Gastrocnemius medialis (tissue), 4 donors: ENCODE measurements at regions of chr7 and their contacts with region 1.

Region 1: GRCh38 chr7:129502376-129502776 is at the start of gene SMKR1:
- DNase-seq: peak; percentile 17 to 28
- ATAC-seq: peak; percentile 62 to 69
- H3K4me3 ChIP-seq: peak within 1 kb of the TSS; percentile 48 to 66 (median 60)
- H3K27ac ChIP-seq: no peak within 1 kb of the TSS
- H3K4me1 ChIP-seq: peaks cover 0 to 7% of the 10 kb centered on the region in 2 donors
- H3K27me3 ChIP-seq: no peaks in the 10 kb centered on the region
- CTCF ChIP-seq: no peak
- POLR2A ChIP-seq: no peak
- total RNA-seq, gene SMKR1: not detected

Region 2: DNA sequence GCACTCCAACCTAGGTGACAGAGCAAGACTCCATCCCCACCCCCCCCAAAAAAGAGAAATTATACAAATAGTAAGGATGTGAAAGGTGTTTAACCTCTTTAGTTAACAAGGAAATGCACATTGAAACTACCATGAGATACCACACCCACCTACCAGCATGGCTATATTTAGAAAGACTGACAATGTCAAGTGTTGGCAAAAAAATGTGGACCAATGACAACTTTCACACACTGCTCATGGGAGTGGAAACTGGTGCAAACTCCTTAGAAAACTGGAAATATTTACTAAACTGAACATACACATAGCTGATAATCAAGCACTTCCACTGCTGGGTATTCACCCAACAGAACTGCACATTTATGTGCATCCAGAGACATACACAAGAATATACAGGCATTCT is 85.9 kb after region 1 on chr7:
- in situ Hi-C with region 1: no loop called
- intact Hi-C with region 1: no loop called
- DNase-seq: no peak
- ATAC-seq: no peak
- H3K4me3 ChIP-seq: no peak overlapping the region
- H3K27ac ChIP-seq: no peak overlapping the region
- H3K4me1 ChIP-seq: no peaks in the 10 kb centered on the region
- H3K27me3 ChIP-seq: no peaks in the 10 kb centered on the region
- CTCF ChIP-seq: no peak
- POLR2A ChIP-seq: no peak

Region 3: DNA sequence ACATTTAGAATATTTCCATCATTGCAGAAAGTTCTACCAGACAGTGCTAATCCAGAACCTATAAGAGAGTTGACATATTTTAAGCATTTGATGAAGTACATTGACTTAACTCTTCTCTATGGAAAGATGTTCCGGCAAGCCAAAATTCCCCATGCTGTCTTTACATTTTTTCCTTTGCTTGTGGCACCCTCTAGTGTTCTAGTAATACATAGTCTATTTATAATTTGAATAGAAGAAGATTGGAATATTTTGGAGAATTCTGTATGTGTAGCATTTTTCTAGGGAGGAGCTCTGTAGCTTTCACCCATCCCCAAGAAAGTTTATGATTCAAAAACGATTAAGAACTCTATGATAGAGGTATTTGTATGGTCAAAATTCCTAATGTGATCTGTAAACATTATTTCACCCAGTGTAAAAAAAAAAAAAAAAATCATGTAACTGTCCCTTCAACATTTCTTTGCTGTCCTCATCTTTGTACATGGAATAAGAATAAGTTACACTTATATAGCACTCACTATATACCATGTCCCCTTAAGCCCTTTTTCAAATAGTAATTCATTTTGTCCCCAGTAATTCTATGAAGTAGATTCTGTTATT is 142.4 kb after region 1 on chr7:
- in situ Hi-C with region 1: no loop called
- intact Hi-C with region 1: loop called (anchors 10 kb)
- DNase-seq: no peak
- ATAC-seq: no peak
- H3K4me3 ChIP-seq: no peak overlapping the region
- H3K27ac ChIP-seq: no peak overlapping the region
- H3K4me1 ChIP-seq: peaks cover 7 to 16% of the 10 kb centered on the region in 2 donors
- H3K27me3 ChIP-seq: no peaks in the 10 kb centered on the region
- CTCF ChIP-seq: peak in 4 of 5 experiments; percentile 23 to 49 (median 34)
- POLR2A ChIP-seq: no peak

Region 4: DNA sequence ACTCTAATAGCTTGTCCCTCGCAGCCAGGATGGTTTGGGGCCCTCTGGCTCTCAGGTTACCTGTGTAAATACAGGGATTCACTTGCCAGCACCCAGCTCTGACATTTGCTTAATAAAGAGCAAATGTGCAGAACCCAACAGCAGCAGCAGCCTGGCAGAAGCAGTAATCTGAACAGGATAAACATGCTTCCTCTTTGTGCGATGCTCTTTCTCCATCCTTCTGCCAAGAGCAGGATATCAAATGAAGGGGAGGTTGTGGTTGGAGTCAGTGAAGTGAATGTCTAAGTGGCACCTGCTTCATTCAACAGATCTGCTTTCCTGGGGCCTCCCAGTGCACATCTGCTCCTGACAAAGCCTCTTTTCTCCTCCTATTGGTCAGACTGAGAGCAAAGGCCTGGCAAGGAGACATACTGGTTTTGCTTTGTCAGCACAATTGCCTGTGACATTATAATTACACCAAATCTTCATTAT is 239.4 kb after region 1 on chr7:
- in situ Hi-C with region 1: no loop called
- intact Hi-C with region 1: no loop called
- DNase-seq: peak in 1 of 2 donors; percentile 31
- ATAC-seq: peak; percentile 3 to 12
- H3K4me3 ChIP-seq: no peak overlapping the region
- H3K27ac ChIP-seq: peak overlapping the region; percentile 85 to 93 (median 89)
- H3K4me1 ChIP-seq: peaks cover 44 to 48% of the 10 kb centered on the region in 2 donors
- H3K27me3 ChIP-seq: no peaks in the 10 kb centered on the region
- CTCF ChIP-seq: peak in 1 of 5 experiments; percentile 21
- POLR2A ChIP-seq: no peak